ENCODE measurements at regions of chr6 and their contacts with region 1.

Region 1: GRCh38 chr6:48027704-48028435 is 83.1 kb downstream of the PTCHD4 start:
- DNase-seq: no peak
- H3K27ac ChIP-seq: no peak overlapping the region
- CTCF ChIP-seq: no peak

Region 2: GRCh38 chr6:48048451-48049129 is 20.7 kb after region 1 on chr6:
- CTCF ChIA-PET with region 1: no interaction called
- POLR2A ChIA-PET with region 1: no interaction called
- DNase-seq: no peak
- H3K27ac ChIP-seq: no peak overlapping the region
- CTCF ChIP-seq: no peak

Region 3: DNA sequence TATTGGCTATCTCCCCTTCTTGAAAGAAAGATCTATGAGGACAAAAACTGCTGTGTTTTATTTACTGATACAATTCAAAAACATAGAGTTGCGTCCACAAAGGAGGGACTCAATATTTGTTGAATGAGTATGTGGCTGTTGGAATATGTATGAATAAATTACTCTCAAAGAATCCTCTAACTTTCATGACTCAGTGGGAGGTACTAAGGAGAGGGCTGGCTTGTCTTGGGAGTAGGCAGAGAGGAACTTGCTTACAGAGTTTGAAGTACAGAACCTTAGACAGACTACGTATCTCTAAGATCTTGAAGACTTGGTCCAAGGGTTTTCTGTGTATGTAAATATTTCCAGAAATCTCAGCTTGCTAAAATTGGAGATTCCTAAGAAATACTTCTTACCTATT is 587.2 kb after region 1 on chr6:
- CTCF ChIA-PET with region 1: no interaction called
- POLR2A ChIA-PET with region 1: interaction called, 12 read pairs
- DNase-seq: no peak
- H3K27ac ChIP-seq: no peak overlapping the region
- CTCF ChIP-seq: no peak